Right ventricle myocardium superior (tissue), 1 donor: ENCODE measurements at regions of chr2 and their contacts with region 1.

Region 1: DNA sequence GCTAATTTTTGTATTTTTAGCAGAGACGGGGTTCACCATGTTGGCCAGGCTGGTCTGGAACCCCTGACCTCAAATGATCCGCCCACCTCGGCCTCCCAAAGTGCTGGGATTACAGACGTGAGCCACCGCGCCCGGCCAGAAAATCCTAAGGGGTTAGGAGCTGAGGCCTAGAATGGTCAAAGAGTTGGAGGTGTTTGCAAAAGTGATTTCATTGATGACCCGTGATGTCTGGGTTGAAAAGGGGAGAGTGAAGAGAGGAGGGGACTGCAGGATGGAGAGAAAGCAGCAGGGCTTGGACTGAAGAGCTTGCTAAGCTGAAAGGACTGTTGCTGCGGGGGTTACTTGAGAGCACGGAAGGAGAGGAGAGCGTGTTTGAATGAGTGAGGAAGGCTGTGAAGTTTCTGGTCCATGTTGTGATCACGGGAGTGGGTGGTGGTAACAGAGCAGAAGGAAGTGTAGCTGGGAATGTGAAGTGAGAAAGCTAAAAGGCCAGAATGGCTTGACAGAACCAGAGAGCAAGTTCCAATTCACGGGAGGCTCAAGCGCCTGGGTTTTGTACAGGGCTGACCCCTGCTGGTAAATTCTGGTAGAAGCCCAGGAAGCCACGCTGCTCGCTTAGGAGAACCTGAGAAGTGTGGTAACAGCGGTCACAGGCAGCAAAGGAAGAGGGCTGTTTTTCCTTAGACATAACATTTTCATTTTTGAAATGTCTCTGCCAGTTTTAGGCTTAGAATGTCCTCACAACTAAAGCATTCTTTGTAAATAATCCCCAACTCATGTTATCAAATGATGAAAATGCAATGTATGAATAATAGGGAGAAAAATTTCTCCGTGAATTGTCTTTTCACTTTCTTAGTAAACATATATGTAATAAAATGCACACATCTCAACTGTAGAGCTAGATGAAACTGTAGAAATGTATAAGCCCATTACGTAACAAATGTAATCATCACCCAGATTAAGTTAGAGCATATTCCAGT is 40.5 kb upstream of the ACTR2 start:
- DNase-seq: peak; percentile 71
- ATAC-seq: peak; percentile 98

Region 2: DNA sequence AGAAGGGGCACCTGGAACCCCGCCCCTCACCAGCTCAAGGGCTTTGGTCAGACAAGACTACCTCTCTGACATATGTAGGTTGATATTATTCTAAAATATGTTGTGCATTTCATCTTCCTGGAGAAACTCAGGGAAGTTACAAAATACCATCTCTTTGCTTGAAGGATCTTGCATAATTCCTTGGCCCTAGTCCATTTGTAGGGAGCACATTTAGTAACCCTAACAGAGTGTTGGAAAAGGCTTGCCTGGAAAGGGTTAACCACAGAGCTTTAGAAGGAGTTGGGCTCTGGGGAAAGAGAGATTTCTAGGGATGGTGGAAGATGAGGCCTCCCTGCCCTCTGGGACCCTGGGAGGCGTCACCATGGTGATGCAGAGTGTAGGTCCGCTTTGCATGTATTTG is 341.0 kb before region 1 on chr2:
- intact Hi-C with region 1: no loop called
- DNase-seq: no peak
- ATAC-seq: peak; percentile 45

Region 3: DNA sequence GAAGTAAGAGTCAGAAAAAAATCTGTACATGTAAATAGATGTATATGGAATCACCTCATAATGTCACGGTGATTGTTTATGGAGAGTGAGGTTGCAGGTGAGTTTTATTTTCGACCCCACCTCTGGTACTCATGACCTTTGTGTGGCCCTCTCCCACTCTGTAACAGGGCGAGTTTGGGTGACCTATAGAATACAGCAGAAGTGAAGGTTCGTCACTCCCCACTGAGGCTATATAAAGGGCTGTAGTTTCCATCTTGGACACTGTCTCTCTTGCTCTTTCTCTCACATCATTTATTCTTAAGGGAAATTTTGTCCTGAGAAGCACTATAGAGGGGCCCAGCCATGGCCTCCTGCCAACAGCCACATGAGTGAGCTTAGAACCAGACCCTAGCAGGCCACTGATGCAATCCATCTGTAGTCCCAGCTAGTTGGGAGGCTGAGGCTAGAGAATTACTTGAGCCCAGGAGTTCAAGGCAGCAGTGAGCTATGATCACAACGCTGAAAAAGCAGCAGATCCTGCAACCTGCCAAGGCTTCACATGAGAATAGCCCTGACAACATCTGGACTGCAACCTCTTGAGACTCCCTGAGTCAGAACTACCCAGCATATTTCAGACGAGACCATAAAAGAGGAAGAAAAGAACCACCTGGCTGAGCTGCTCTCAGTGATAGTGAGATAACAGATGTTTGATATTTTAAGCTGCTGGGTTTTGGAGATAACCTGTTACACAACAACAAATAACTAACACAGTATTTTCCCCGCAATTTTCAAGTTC is 272.2 kb before region 1 on chr2:
- intact Hi-C with region 1: loop called (anchors 10 kb)
- DNase-seq: no peak
- ATAC-seq: no peak

Region 4: DNA sequence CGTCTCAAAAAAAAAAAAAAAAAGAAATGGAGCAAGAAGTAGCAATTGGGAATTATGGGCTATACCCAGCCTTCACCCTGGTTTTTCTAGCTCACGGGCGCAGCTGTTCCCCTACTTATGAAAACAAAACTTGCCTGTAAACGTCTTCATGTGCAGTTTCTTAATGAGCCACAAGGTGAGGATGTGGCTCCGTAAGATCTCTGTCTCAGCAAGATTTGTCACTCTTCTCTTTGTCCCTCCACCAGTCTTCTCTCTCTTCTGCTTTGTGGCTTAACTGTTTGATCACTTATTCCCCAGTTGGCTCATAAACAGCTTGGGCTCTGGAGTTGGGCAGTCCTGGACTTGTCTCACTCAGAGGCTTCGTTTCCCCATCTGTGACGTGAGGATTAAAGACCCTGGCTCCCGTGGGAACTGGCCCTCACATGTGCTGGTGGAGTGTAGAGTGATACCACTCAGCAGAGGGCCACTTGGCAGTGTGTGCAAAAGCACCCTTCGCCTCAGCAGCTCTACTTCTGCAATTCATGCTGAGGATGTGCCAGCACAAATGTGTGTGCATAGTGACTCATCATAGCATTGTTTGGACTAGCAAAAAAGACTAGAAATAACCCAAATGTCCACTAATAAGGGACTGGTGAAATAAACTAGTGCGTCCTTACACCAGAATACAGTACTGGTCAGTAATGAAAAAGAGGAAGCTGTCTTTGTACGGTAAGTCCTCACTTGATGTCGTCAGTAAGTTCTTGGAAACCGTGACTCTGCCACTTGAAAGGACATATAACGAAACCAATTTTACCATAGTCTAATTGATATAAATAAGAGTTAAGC is 122.2 kb before region 1 on chr2:
- intact Hi-C with region 1: loop called (anchors 10 kb)
- DNase-seq: peak; percentile 82
- ATAC-seq: peak; percentile 78

Region 5: GRCh38 chr2:65075605-65076344 is 111.4 kb before region 1 on chr2:
- intact Hi-C with region 1: no loop called
- DNase-seq: peak; percentile 63
- ATAC-seq: peak; percentile 69

Region 6: GRCh38 chr2:65604245-65604644 is 417.1 kb after region 1 on chr2:
- intact Hi-C with region 1: no loop called
- DNase-seq: no peak
- ATAC-seq: no peak